B cell (primary cell): ENCODE measurements at regions of chr4 and their contacts with region 1.

Region 1: GRCh38 chr4:38804654-38805295 is at the start of gene TLR1:
- DNase-seq: peak; percentile 85
- ATAC-seq: peak; percentile 52
- H3K4me3 ChIP-seq: peak within 1 kb of the TSS; percentile 57 to 97 (median 70)
- H3K4me3 Mint-ChIP-seq: peak within 1 kb of the TSS; percentile 80
- H3K27ac ChIP-seq: peak within 1 kb of the TSS; percentile 72 to 97
- H3K27ac Mint-ChIP-seq: peak within 1 kb of the TSS; percentile 95
- H3K4me1 ChIP-seq: peaks cover 32 to 45% of the 10 kb centered on the region in 2 donors
- H3K4me1 Mint-ChIP-seq: peaks cover 56% of the 10 kb centered on the region
- H3K27me3 ChIP-seq: no peaks in the 10 kb centered on the region
- H3K27me3 Mint-ChIP-seq: no peaks in the 10 kb centered on the region
- CTCF ChIP-seq: peak; percentile 75
- total RNA-seq, gene TLR1: 50.8 and 54.1 TPM in 2 replicates

Region 2: DNA sequence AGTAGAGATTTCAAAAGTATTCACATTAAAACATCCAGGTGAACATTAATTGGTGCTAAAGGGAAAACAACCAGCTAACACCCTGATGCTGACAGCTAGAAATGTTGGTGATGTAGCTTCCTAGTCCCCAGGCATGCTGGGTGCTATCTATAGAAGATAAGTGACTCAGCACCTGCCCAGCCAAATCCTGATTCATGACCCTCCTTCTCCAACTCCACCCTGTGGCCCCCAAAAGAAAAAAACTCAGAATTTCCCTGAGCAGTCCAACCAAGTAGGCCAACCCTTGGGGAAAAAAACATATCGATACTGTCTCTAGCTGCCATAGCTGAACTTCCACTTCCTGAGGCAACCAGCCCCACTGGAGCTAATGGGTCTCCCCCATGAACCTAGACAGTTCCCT is 338.4 kb before region 1 on chr4:
- CTCF ChIA-PET with region 1: no interaction called
- POLR2A ChIA-PET with region 1: no interaction called
- intact Hi-C with region 1: no loop called
- DNase-seq: no peak
- ATAC-seq: no peak
- H3K4me3 ChIP-seq: no peak overlapping the region
- H3K4me3 Mint-ChIP-seq: no peak overlapping the region
- H3K27ac ChIP-seq: no peak overlapping the region
- H3K27ac Mint-ChIP-seq: no peak overlapping the region
- H3K4me1 ChIP-seq: no peaks in the 10 kb centered on the region
- H3K4me1 Mint-ChIP-seq: peaks cover 6% of the 10 kb centered on the region
- H3K27me3 ChIP-seq: no peaks in the 10 kb centered on the region
- H3K27me3 Mint-ChIP-seq: no peaks in the 10 kb centered on the region
- CTCF ChIP-seq: no peak

Region 3: GRCh38 chr4:38547052-38547451 is 257.7 kb before region 1 on chr4:
- CTCF ChIA-PET with region 1: no interaction called
- POLR2A ChIA-PET with region 1: no interaction called
- intact Hi-C with region 1: no loop called
- DNase-seq: no peak
- ATAC-seq: no peak
- H3K4me3 ChIP-seq: no peak overlapping the region
- H3K4me3 Mint-ChIP-seq: no peak overlapping the region
- H3K27ac ChIP-seq: no peak overlapping the region
- H3K27ac Mint-ChIP-seq: no peak overlapping the region
- H3K4me1 ChIP-seq: no peaks in the 10 kb centered on the region
- H3K4me1 Mint-ChIP-seq: no peaks in the 10 kb centered on the region
- H3K27me3 ChIP-seq: no peaks in the 10 kb centered on the region
- H3K27me3 Mint-ChIP-seq: peaks cover 10% of the 10 kb centered on the region
- CTCF ChIP-seq: no peak

Region 4: DNA sequence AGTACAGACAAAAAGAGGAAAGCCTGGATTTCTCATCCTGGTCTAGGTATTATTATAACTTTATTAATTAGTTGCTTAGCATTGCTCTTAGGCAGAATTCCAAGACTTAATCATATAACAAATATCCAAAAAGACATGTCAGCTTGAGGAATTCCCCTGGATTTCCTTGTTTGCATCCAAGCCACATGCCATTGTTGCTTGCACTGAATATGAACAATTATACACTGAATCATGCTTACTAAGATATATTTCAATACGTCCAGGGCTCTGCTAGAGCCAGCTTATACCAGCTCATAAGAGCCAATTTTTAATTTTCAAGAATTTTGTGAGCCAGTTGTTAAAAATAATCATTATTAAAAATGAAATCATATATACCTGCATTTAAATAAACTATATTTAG is 16.4 kb before region 1 on chr4:
- CTCF ChIA-PET with region 1: interaction called, 134 read pairs
- POLR2A ChIA-PET with region 1: interaction called, 4 read pairs
- intact Hi-C with region 1: no loop called
- DNase-seq: no peak
- ATAC-seq: no peak
- H3K4me3 ChIP-seq: no peak overlapping the region
- H3K4me3 Mint-ChIP-seq: no peak overlapping the region
- H3K27ac ChIP-seq: no peak overlapping the region
- H3K27ac Mint-ChIP-seq: no peak overlapping the region
- H3K4me1 ChIP-seq: peaks cover 8 to 20% of the 10 kb centered on the region in 2 donors
- H3K4me1 Mint-ChIP-seq: peaks cover 31% of the 10 kb centered on the region
- H3K27me3 ChIP-seq: no peaks in the 10 kb centered on the region
- H3K27me3 Mint-ChIP-seq: no peaks in the 10 kb centered on the region
- CTCF ChIP-seq: no peak

Region 5: GRCh38 chr4:38815885-38816782 is 11.4 kb after region 1 on chr4:
- CTCF ChIA-PET with region 1: interaction called, 19 read pairs
- POLR2A ChIA-PET with region 1: interaction called, 9 read pairs
- intact Hi-C with region 1: loop called (anchors 1 kb)
- DNase-seq: peak; percentile 88
- ATAC-seq: peak; percentile 87
- H3K4me3 ChIP-seq: peak overlapping the region in 3 of 5 experiments; percentile 5 to 53 (median 16)
- H3K4me3 Mint-ChIP-seq: peak overlapping the region; percentile 63
- H3K27ac ChIP-seq: peak overlapping the region; percentile 93 to 96
- H3K27ac Mint-ChIP-seq: peak overlapping the region; percentile 94
- H3K4me1 ChIP-seq: peaks cover 53 to 58% of the 10 kb centered on the region in 2 donors
- H3K4me1 Mint-ChIP-seq: peaks cover 60% of the 10 kb centered on the region
- H3K27me3 ChIP-seq: no peaks in the 10 kb centered on the region
- H3K27me3 Mint-ChIP-seq: no peaks in the 10 kb centered on the region
- CTCF ChIP-seq: no peak